A549 (cell line): ENCODE measurements at regions of chr3 and their contacts with region 1.

Region 1: GRCh38 chr3:5226783-5227182 is 39.3 kb downstream of the EDEM1 start:
- DNase-seq: peak in 1 of 2 experiments; percentile 29
- ATAC-seq: 0 out of 6 replicates have a peak, but pooled peaks of 1 of the 2 experiments have one; percentile 30
- H3K4me3 ChIP-seq: no peak overlapping the region
- H3K27ac ChIP-seq: no peak overlapping the region
- H3K4me1 ChIP-seq: no peaks in the 10 kb centered on the region
- CTCF ChIP-seq: peak; percentile 56
- EP300 ChIP-seq: no peak
- POLR2A ChIP-seq: no peak
- RAD21 ChIP-seq: peak; percentile 68 to 73

Region 2: DNA sequence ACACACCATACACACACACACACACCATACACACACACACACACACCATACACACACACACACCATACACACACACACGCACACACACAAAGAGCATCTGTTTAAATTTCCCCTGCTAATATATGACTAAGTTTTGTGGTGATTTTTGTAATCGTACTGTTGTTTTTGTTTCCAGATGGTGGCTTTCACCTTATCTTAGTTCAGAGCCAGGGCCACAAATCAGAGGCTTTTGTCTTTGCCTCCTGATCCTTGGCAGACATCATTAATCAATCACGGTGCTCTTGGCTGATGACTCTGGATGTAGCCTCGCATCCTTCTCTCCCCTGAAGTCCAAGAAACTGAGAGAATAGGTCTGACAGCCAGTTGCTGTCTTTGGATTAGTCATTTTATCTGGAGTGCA is 12.8 kb after region 1 on chr3:
- CTCF ChIA-PET with region 1: no interaction called
- POLR2A ChIA-PET with region 1: no interaction called
- DNase-seq: no peak
- ATAC-seq: no peak
- H3K4me3 ChIP-seq: no peak overlapping the region
- H3K27ac ChIP-seq: no peak overlapping the region
- H3K4me1 ChIP-seq: no peaks in the 10 kb centered on the region
- CTCF ChIP-seq: no peak
- EP300 ChIP-seq: no peak
- POLR2A ChIP-seq: no peak
- RAD21 ChIP-seq: no peak

Region 3: GRCh38 chr3:5787861-5788488 is 561.2 kb after region 1 on chr3:
- CTCF ChIA-PET with region 1: no interaction called
- POLR2A ChIA-PET with region 1: interaction called, 13 read pairs
- DNase-seq: peak in 1 of 2 experiments; percentile 24
- ATAC-seq: peak; percentile 76 to 91
- H3K4me3 ChIP-seq: no peak overlapping the region
- H3K27ac ChIP-seq: no peak overlapping the region
- H3K4me1 ChIP-seq: 0 out of 3 replicates have a peak, but pooled peaks cover 9% of the 10 kb centered on the region
- CTCF ChIP-seq: peak; percentile 31
- EP300 ChIP-seq: no peak
- POLR2A ChIP-seq: no peak
- RAD21 ChIP-seq: peak; percentile 11 to 54